Left ventricle myocardium inferior (tissue), 1 donor: ENCODE measurements at regions of chr11 and their contacts with region 1.

Region 1: DNA sequence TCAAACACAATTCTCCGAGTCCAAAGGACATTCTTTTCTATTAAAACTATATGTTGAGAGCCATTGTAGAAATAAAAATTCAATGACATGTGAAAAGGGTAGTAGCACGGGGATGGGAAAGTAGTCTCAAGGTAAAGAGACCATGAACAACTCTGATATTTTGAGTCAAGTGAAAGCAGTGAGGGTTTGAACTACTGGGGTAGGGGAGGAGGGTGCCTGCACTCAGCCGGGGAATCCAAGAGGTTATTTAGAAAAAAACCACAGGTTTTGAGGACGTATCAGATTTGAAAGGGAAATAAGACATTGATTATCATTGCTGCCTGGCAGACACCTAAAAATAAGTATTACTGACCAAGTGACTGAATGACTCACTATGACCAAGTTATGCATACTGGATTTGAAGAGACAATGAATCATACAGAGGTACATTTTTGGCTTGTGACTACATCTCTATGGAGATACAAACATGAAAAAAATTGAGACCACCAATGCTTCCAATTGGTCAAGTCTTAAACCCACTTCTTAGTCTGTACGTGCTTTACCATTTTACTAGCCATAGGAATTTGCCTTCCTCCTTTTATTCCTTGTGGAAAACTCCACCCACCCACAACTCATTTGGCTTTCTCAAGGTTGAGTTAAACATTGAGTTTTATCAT is 2.2 kb upstream of the OR52H1 start:
- DNase-seq: no peak
- H3K4me3 ChIP-seq: no peak overlapping the region
- H3K27ac ChIP-seq: no peak overlapping the region
- H3K4me1 ChIP-seq: no peaks in the 10 kb centered on the region
- H3K27me3 ChIP-seq: no peaks in the 10 kb centered on the region
- CTCF ChIP-seq: no peak

Region 2: GRCh38 chr11:5460983-5461621 is 89.5 kb before region 1 on chr11:
- intact Hi-C with region 1: loop called (anchors 10 kb)
- DNase-seq: no peak
- H3K4me3 ChIP-seq: no peak overlapping the region
- H3K27ac ChIP-seq: no peak overlapping the region
- H3K4me1 ChIP-seq: no peaks in the 10 kb centered on the region
- H3K27me3 ChIP-seq: no peaks in the 10 kb centered on the region
- CTCF ChIP-seq: no peak